HepG2 (cell line): ENCODE measurements at regions of chr16 and their contacts with region 1.

Region 1: GRCh38 chr16:85420501-85421337 is 192.4 kb upstream of the GSE1 start:
- DNase-seq: peak; percentile 35
- ATAC-seq: peak; percentile 50
- H3K4me3 ChIP-seq: peak overlapping the region in 1 of 3 experiments; percentile 65; a peak in 1 of 6 replicates
- H3K27ac ChIP-seq: no peak overlapping the region
- H3K4me1 ChIP-seq: peaks cover 46% of the 10 kb centered on the region
- H3K27me3 ChIP-seq: peaks cover 5 to 18% of the 10 kb centered on the region in 2 experiments; a peak in 4 of 5 replicates
- CTCF ChIP-seq: peak; percentile 100
- EP300 ChIP-seq: peak; percentile 35 to 67; a peak in 3 of 4 replicates
- POLR2A ChIP-seq: no peak
- RAD21 ChIP-seq: peak; percentile 100

Region 2: DNA sequence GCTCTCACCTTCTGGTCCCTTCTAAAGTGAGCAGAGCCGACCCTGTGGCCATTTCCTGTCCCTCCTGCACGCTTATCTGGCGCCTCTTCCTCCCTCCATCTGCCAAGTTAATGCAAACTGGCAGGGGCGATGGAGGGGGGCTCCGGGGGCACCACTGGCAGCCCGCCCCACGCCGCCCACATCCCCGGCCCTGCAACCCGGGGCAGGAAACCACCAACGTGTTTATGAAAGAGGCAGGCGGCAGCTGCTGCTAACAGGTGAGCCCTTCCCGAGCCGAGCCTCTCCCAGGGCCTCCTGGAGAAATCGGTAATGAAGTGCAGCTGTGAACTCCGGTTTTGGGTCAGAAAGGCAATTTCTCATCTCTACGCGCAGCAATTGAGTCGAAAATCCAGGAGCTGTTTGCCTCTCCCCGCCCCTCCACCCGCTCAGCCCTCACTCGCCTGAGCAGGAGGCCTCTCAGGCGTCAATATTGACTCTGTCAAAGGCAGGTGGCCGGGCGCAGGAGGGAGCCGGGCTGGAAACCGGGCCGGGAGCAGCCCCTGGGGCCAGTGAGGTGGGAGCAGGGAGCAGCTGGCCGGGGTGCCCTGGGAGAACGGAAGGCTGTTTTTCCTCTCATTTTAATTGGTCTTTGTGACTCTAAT is 28.0 kb after region 1 on chr16:
- CTCF ChIA-PET with region 1: interaction called, 3 read pairs
- POLR2A ChIA-PET with region 1: interaction called, 3 read pairs
- in situ Hi-C with region 1: no loop called
- intact Hi-C with region 1: loop called (anchors 2 kb)
- DNase-seq: peak; percentile 79
- ATAC-seq: peak; percentile 91
- H3K4me3 ChIP-seq: peak overlapping the region in 2 of 3 experiments; percentile 21 to 59; a peak in 3 of 6 replicates
- H3K27ac ChIP-seq: peak overlapping the region; percentile 68
- H3K4me1 ChIP-seq: peaks cover 59% of the 10 kb centered on the region
- H3K27me3 ChIP-seq: peaks cover 5 to 59% of the 10 kb centered on the region in 2 experiments
- CTCF ChIP-seq: peak; percentile 44; the same call in 1 of the 2 replicates
- EP300 ChIP-seq: peak in 1 of 2 experiments; percentile 85; a peak in 2 of 4 replicates
- POLR2A ChIP-seq: no peak
- RAD21 ChIP-seq: peak; percentile 20; the same call in 1 of the 2 replicates

Region 3: DNA sequence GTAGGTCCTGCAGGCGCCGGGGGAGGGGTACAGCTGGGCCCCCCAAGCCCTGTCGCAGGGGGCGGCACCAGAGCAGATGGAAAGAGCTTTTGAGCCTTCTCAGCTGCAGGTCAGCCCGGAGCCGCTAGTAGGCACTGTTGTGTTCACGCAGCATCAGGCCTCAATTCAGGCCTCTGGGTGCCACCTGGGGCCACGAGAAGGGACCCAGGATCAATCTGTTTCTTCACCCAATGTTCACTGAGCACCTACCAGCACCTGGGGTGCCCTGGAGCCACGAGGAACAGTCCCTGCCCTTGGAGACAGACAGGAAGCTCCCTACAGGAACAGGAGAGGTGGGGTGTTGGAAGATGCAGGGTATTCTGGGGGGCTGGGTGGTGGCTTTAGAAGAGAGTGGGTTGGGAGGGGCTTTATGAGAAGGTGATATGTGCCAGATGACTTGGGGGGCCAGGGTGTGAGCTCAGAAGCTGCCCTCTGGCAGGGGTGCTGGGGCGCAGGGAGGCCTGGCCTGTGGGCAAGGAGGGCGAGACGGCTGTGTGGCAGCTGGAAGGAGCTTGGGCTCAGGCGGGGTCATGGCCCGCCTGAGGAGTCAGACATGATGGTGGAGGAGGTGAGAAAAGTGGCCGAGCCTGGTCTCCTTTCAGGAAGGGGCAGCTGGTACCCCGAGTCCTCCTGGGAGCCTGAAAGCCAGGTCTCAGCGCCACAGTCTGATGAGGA is 70.5 kb after region 1 on chr16:
- CTCF ChIA-PET with region 1: interaction called, 10 read pairs
- POLR2A ChIA-PET with region 1: no interaction called
- in situ Hi-C with region 1: no loop called
- intact Hi-C with region 1: no loop called
- DNase-seq: peak; percentile 53
- ATAC-seq: peak; percentile 62
- H3K4me3 ChIP-seq: peak overlapping the region in 2 of 3 experiments; percentile 20 to 61; a peak in 2 of 6 replicates
- H3K27ac ChIP-seq: no peak overlapping the region
- H3K4me1 ChIP-seq: peaks cover 32% of the 10 kb centered on the region
- H3K27me3 ChIP-seq: peaks cover 0 to 2% of the 10 kb centered on the region in 2 experiments; a peak in 1 of 5 replicates
- CTCF ChIP-seq: peak; percentile 95
- EP300 ChIP-seq: no peak
- POLR2A ChIP-seq: no peak
- RAD21 ChIP-seq: peak; percentile 90

Region 4: DNA sequence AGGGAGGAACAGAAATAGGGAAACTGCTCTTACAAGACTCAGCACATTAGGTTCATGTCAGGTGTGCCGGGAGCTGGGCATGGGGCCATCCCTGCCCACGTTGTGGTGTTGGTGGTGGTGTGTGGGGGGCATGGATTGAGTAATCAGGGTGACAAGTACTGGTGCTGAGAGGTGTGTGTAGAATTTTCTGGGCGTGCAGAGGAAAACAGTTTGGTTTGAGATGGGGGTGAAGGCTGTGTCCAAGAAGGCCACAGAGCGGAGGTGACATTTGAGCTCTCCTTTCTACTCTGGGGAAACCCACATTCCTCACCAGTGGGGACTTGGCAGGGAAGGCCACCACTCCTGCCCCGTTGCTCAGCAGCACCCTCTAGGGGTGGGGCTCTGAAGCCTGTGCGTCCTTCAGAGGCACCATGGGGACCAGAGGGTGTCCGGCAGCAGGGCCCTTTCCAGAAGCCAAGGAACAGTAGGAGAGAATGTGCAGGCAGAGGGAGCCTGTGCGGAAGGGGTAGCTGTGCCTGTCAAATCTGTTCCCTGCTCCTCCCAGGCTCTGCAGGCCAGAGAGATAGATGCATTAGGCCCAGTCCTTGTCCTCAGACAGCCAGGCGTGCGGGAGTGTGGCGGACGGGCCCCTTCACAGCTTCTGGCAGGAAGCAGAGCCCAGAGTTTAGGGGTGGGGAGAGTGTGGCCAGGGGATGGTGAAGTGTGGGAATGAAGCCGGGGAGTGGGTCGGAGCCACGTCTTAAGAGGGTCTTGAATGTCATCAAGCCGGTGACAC is 143.7 kb after region 1 on chr16:
- CTCF ChIA-PET with region 1: interaction called, 51 read pairs
- POLR2A ChIA-PET with region 1: interaction called, 5 read pairs
- in situ Hi-C with region 1: no loop called
- intact Hi-C with region 1: no loop called
- DNase-seq: no peak
- ATAC-seq: no peak
- H3K4me3 ChIP-seq: no peak overlapping the region
- H3K27ac ChIP-seq: no peak overlapping the region
- H3K4me1 ChIP-seq: peaks cover 56% of the 10 kb centered on the region
- H3K27me3 ChIP-seq: no peaks in the 10 kb centered on the region
- CTCF ChIP-seq: peak; percentile 72
- EP300 ChIP-seq: no peak
- POLR2A ChIP-seq: no peak
- RAD21 ChIP-seq: no peak

Region 5: GRCh38 chr16:85615852-85616606 is 195.3 kb after region 1 on chr16:
- CTCF ChIA-PET with region 1: interaction called, 93 read pairs
- POLR2A ChIA-PET with region 1: interaction called, 10 read pairs
- in situ Hi-C with region 1: no loop called
- intact Hi-C with region 1: loop called (anchors 2 kb)
- DNase-seq: peak; percentile 64
- ATAC-seq: peak; percentile 8
- H3K4me3 ChIP-seq: peak overlapping the region in 1 of 3 experiments; percentile 85; a peak in 4 of 6 replicates
- H3K27ac ChIP-seq: peak overlapping the region; percentile 93
- H3K4me1 ChIP-seq: peaks cover 32% of the 10 kb centered on the region
- H3K27me3 ChIP-seq: no peaks in the 10 kb centered on the region
- CTCF ChIP-seq: peak; percentile 87
- EP300 ChIP-seq: no peak
- POLR2A ChIP-seq: 0 out of 4 replicates have a peak, but pooled peaks of 1 of the 2 experiments have one; percentile 28
- RAD21 ChIP-seq: peak; percentile 70

Region 6: GRCh38 chr16:85717393-85718121 is 296.8 kb after region 1 on chr16:
- CTCF ChIA-PET with region 1: interaction called, 12 read pairs
- POLR2A ChIA-PET with region 1: no interaction called
- in situ Hi-C with region 1: no loop called
- intact Hi-C with region 1: no loop called
- DNase-seq: peak; percentile 60
- ATAC-seq: peak; percentile 72
- H3K4me3 ChIP-seq: no peak overlapping the region
- H3K27ac ChIP-seq: no peak overlapping the region
- H3K4me1 ChIP-seq: 0 out of 2 replicates have a peak, but pooled peaks cover 5% of the 10 kb centered on the region
- H3K27me3 ChIP-seq: peaks cover 7 to 36% of the 10 kb centered on the region in 2 experiments; a peak in 4 of 5 replicates
- CTCF ChIP-seq: peak; percentile 87
- EP300 ChIP-seq: no peak
- POLR2A ChIP-seq: no peak
- RAD21 ChIP-seq: peak; percentile 87